Posterior vena cava (tissue), 2 donors: ENCODE measurements at regions of chr17 and their contacts with region 1.

Region 1: DNA sequence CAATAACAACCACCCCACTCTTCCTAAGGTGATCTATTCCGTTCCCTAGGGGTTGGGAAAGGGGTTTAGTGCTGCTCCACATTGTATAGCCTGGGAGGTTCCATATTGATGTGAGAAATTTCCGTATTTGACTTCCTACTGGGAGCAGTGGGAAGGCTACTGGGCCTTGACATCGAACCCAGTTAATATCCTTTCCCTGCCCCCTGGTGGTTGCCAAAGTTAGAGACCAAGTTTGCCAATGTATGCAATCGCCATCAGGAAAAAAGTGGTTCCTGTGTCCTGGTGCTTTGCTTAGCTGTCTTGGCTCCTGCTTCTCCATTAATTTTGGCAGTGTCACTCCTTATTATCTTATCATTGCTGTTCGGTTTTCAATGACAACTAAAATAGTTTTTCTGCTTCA is 914.9 kb downstream of the KCNJ2 start:
- DNase-seq: no peak

Region 2: GRCh38 chr17:70919241-70919640 is 165.0 kb before region 1 on chr17:
- intact Hi-C with region 1: no loop called
- DNase-seq: no peak

Region 3: GRCh38 chr17:71067669-71068407 is 16.4 kb before region 1 on chr17:
- intact Hi-C with region 1: loop called in 1 of 2 experiments (anchors 1 kb)
- DNase-seq: no peak

Region 4: GRCh38 chr17:71110326-71110725 is 26.1 kb after region 1 on chr17:
- intact Hi-C with region 1: no loop called
- DNase-seq: no peak

Region 5: DNA sequence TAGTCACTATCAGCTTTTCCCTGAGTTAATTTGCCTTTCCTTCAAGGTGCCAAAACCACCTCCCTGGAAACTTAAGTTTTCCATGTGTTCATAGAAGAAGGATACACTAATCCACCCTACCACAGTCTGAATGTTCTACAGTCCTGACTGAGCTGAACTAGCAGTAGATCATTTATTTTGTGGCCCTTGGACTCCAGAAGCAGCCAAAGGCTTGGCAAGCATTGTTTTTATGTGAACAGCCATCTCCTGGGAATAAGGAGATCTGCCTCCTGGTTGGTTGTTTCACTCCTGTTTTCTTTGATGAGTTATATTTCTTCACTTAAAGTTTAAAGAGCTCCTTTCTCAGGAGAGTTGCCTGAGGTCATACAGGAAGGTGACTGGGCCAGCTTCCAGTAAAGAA is 402.0 kb after region 1 on chr17:
- intact Hi-C with region 1: loop called in 1 of 2 experiments (anchors 5 kb)
- DNase-seq: no peak